Activated CD4-positive, alpha-beta memory T cell treated with anti-CD3 and anti-CD28 coated beads, Interleukin-2, amount 10 ng/mL, durations not matched to agents 7 days and 5 days (primary cell): ENCODE measurements at regions of chr20 and their contacts with region 1.

Region 1: DNA sequence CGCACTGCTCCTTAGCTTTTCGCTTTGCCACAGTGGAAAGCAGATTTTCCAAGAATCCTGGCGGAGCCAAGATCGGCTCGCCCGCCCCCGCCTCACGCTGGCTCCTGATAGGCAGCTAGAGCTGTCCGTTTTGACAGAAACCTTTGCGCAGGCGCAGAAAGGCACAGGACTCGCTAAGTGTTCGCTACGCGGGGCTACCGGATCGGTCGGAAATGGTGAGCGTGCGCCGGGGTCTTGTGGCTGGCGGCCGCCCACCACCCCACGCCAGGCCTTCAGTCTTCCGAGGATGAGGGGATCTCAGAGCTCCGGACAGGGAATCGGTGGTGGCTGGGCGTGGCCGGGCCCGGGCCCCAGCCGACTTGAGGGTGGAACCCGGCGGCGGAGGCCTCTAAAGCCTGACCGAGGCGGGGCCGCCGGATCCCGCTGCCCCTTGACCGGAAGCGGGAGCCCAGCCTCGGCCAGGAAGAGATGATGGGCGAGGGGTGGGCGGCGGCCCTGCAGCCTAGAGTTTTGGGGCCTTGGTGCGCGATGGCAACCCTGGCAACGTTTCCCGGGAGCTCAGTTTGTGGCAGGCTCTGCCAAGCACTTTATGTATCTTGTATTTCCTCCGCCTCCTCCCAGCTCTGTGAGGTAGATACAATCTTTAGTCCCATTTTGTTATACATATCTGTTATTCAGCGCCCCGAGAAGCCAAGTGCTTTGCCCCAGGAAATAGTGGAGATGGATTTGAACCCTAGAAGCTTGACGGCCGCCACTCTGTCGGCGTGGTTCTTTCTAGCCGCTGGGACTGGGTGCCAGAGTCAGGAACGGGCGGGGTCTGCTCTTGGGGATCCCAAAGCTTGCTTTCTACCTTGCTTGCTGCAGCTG is at the start of gene DYNLRB1:
- DNase-seq: peak; percentile 95
- H3K4me3 Mint-ChIP-seq: peak within 1 kb of the TSS; percentile 97
- H3K27ac Mint-ChIP-seq: peak within 1 kb of the TSS; percentile 95
- H3K4me1 Mint-ChIP-seq: peaks cover 37% of the 10 kb centered on the region
- H3K27me3 Mint-ChIP-seq: no peaks in the 10 kb centered on the region
- total RNA-seq, gene DYNLRB1: 107 to 109 TPM

Region 2: DNA sequence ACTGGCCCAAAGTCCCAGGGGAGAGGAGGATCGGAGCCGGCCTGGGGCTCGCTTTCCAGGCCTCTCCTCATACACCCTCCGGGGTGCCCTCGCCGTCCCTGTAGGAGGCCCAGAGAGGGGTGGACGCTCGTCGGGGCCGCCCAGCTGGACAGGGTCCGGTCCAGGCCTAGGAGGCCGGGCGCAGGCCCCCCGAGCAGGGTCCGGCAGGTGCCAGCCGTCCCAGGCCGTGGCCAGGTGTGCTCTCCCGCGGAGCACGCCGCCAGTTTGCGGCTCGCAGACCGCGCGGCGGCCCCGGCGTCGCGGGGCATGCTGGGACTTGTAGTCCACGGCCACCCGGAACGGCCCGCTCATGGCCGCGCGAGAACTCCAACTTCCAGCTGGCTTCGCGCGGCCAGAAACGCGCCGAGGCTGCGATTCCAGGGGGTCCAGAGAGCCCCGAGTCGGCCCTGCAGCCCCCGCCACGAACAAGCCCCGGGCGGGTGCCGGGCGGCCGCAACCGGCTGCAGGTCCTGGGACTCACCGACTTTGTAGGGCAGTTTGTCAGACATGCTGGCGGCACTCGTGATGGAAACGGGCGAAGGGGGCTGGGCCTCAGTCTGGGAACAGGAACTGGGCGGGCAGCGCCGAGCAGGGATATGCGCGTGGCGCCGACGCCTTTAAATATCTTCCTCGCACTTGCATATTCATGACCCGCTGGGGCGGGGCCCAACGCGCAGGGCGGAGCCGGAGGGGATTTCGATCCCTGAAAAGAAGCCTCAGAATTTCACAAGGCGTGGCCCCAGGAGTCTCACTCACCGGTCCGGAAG is 213.6 kb before region 1 on chr20 and contains the start of gene AHCY:
- CTCF ChIA-PET with region 1: interaction called, 15 read pairs
- POLR2A ChIA-PET with region 1: interaction called, 30 read pairs
- DNase-seq: peak; percentile 95
- H3K4me3 Mint-ChIP-seq: peak within 1 kb of the TSS; percentile 91
- H3K27ac Mint-ChIP-seq: peak within 1 kb of the TSS; percentile 88
- H3K4me1 Mint-ChIP-seq: peaks cover 26% of the 10 kb centered on the region
- H3K27me3 Mint-ChIP-seq: peaks cover 3% of the 10 kb centered on the region
- total RNA-seq, gene AHCY: 50.5 to 53.0 TPM

Region 3: DNA sequence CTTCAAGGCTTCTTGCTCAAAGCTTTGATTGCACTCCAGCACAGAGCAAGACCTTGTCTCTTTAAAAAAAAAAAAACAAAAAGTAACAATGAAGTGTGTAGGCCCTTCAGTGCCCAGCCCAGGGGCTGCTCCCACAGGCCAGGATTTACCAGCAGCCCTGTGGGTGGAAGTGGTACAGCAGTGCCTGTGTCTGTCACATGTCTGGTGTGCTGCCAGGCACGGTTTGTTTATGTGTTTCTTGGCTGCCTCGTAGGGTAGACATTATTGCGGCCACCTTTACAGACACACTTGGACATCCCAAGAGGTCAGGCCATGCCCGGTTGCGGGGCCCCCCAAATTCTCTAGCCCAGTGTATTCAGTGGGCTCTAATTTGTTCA is 12.4 kb after region 1 on chr20:
- CTCF ChIA-PET with region 1: interaction called, 4 read pairs
- POLR2A ChIA-PET with region 1: interaction called, 12 read pairs
- DNase-seq: no peak
- H3K4me3 Mint-ChIP-seq: no peak overlapping the region
- H3K27ac Mint-ChIP-seq: no peak overlapping the region
- H3K4me1 Mint-ChIP-seq: peaks cover 2% of the 10 kb centered on the region
- H3K27me3 Mint-ChIP-seq: no peaks in the 10 kb centered on the region

Region 4: DNA sequence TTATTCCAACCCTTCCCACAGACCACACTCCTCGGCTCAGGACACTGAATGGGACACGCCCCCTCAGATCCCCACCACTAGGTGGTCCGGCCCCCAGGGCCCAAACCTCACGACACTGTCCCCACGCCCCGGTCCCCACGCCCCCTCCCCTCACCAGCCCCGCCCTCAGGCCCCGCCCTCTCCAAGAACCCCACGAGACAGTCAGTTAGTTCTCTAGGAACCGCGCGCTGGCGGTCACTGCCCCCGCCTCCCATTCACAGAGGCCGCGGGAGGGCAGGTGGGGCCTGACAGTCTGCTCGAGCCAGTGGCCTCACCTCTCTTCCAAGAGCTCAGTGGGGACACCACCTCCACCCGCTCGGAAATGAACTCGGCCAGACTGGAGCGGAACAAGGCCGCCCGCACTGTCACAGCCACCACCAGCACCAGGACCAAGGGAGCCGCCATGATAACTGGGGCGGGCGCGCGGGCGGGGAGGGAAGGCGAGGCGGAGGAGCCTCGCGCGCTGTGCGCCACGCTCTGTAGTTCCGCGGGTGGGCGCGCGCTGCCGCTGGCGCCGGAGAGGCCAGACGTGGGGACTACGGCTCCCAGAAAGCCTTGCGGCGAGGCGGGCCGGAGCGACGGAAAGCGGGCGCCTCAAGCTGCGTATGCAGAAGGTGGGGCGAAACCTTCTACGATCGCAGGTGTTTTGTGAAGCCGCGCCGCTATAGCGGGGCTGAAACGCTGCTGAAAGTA is 160.3 kb after region 1 on chr20 and contains the start of gene PIGU:
- CTCF ChIA-PET with region 1: no interaction called
- POLR2A ChIA-PET with region 1: interaction called, 17 read pairs
- DNase-seq: peak; percentile 98
- H3K4me3 Mint-ChIP-seq: peak within 1 kb of the TSS; percentile 98
- H3K27ac Mint-ChIP-seq: peak within 1 kb of the TSS; percentile 88
- H3K4me1 Mint-ChIP-seq: peaks cover 36% of the 10 kb centered on the region
- H3K27me3 Mint-ChIP-seq: no peaks in the 10 kb centered on the region
- total RNA-seq, gene PIGU: 18.3 to 18.6 TPM

Region 5: DNA sequence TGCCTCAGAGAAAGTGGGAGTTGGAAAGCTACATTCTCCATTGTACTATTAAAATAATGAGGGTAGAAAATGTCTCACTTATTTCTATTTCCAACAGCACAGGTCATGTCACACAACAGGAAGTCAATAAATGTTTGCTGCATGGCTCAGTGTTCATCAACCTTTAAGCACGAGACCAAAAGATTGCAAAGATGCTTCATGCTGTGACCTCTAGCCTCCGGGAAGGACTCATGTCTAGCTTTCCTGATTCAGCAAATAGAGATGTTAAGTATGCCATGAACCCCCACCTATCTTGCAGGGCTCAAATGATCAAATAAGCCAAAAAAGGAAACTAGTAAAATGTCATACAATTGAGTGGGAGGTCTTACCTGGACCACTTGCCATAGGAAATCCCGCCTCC is 251.6 kb after region 1 on chr20:
- CTCF ChIA-PET with region 1: interaction called, 13 read pairs
- POLR2A ChIA-PET with region 1: no interaction called
- DNase-seq: no peak
- H3K4me3 Mint-ChIP-seq: no peak overlapping the region
- H3K27ac Mint-ChIP-seq: no peak overlapping the region
- H3K4me1 Mint-ChIP-seq: peaks cover 2% of the 10 kb centered on the region
- H3K27me3 Mint-ChIP-seq: no peaks in the 10 kb centered on the region